ENCODE measurements at regions of chr1 and their contacts with region 1.

Region 1: DNA sequence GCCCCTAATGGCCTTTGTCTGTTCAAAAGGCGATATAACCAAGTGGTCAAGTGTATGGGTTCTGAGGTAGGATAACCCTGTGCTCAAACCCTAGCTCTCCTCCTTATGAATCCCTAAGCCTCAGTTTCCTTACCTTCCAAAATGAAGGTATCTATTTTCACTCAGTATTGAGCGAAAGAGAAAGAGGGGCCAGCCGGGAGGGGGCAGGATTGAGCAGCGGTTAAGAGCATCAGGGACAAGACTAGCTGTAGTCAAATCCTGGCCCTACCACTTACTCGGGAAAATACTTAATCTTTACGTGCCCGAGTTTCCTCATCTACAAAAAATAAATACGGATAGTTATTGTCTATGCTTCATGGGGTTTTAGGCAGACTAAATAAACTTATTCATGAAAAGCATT is 25.7 kb downstream of the LY9 start:
- DNase-seq: no peak
- H3K4me3 ChIP-seq: no peak overlapping the region
- H3K27ac ChIP-seq: no peak overlapping the region
- H3K4me1 ChIP-seq: no peaks in the 10 kb centered on the region
- H3K27me3 ChIP-seq: no peaks in the 10 kb centered on the region
- CTCF ChIP-seq: no peak
- EP300 ChIP-seq: no peak
- POLR2A ChIP-seq: no peak

Region 2: GRCh38 chr1:160726498-160727315 is 94.9 kb before region 1 on chr1:
- intact Hi-C with region 1: loop called (anchors 10 kb)
- DNase-seq: peak; percentile 63 to 88
- H3K4me3 ChIP-seq: no peak overlapping the region
- H3K27ac ChIP-seq: peak overlapping the region in 1 of 5 donors; percentile 65
- H3K4me1 ChIP-seq: peaks cover 0 to 14% (median 3%) of the 10 kb centered on the region in 4 donors
- H3K27me3 ChIP-seq: no peaks in the 10 kb centered on the region
- CTCF ChIP-seq: peak in 5 of 7 experiments; percentile 48 to 80 (median 75)
- EP300 ChIP-seq: no peak
- POLR2A ChIP-seq: no peak

Region 3: GRCh38 chr1:161139765-161140164 is 318.1 kb after region 1 on chr1:
- intact Hi-C with region 1: no loop called
- DNase-seq: peak; percentile 46 to 77
- H3K4me3 ChIP-seq: no peak overlapping the region
- H3K27ac ChIP-seq: no peak overlapping the region
- H3K4me1 ChIP-seq: peaks cover 0 to 13% (median 4%) of the 10 kb centered on the region in 4 donors
- H3K27me3 ChIP-seq: no peaks in the 10 kb centered on the region
- CTCF ChIP-seq: peak in 4 of 7 experiments; percentile 25 to 52 (median 36)
- EP300 ChIP-seq: no peak
- POLR2A ChIP-seq: no peak

Measured in stomach (tissue), 19 donors.